GM13976 (cell line): ENCODE measurements at regions of chr17 and their contacts with region 1.

Region 1: DNA sequence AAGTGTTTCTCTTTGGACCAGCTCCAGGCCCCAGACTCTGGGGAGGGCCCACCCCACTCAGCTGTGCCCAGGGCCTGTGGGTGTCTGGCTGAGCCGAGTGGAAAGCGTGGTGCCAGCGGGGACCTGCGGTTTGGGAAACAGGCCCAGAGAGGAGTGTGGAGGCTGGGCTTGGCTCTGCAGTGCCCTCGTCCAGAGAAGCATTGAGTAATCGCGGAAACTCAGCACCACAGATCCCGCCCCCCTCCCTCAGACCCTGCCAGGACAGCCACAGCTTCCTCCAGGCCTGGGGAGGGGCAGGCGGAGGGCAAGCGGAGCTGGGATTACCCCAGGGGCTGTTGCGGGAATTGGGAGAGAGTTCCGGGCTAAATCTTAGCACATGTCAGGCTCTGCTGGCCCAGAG is 14.6 kb upstream of the PITPNA start:
- DNase-seq: no peak
- CTCF ChIP-seq: no peak

Region 2: GRCh38 chr17:1628856-1629646 is 51.9 kb after region 1 on chr17:
- in situ Hi-C with region 1: loop called (anchors 5 kb)
- DNase-seq: peak; percentile 97
- CTCF ChIP-seq: peak; percentile 31